ENCODE measurements at regions of chr7 and their contacts with region 1.

Region 1: GRCh38 chr7:111735661-111736551 is 173.6 kb upstream of the IMMP2L start:
- DNase-seq: peak; percentile 87 to 92 (median 88)
- ATAC-seq: peak; percentile 81
- H3K4me3 ChIP-seq: no peak overlapping the region
- H3K27ac ChIP-seq: no peak overlapping the region
- H3K4me1 ChIP-seq: no peaks in the 10 kb centered on the region
- H3K27me3 ChIP-seq: peaks cover 5 to 9% of the 10 kb centered on the region in 2 experiments; a peak in 3 of 5 replicates
- CTCF ChIP-seq: peak; percentile 89 to 98 (median 94)
- EP300 ChIP-seq: no peak
- POLR2A ChIP-seq: no peak
- RAD21 ChIP-seq: peak; percentile 98 to 99

Region 2: DNA sequence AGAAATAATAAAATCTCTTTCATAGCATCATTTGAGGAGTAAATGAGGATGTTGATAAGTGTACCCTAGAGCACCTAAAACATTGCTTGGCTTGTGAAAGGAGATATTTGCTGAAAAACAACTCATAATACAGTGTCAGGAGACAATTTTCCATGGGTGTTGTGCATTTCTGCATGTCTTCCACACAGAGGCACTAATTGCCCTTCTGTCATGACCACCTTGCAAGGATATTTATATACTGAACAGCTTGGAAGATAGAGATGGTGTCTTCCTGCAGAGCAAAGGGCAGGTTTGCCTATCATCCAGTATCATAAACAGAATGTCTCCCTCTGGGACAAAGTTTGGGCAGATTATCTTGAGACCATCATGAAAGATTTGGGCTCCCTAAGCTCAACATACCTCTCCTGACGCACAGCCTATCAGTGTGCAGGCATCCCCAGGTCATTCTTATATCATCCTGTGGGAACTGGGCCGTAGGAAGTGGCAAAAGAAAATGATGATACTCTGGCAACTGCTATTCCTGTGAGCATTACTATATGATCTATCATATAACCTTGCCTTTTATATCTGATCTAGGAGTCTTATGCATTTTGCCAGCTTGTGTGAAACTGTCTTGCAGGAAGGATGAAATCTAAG is 1140.1 kb before region 1 on chr7:
- CTCF ChIA-PET with region 1: no interaction called
- POLR2A ChIA-PET with region 1: no interaction called
- in situ Hi-C with region 1: no loop called
- intact Hi-C with region 1: loop called (anchors 10 kb)
- DNase-seq: peak in 1 of 4 experiments; percentile 4
- ATAC-seq: peak; percentile 55; the same call in 2 of the 3 replicates
- H3K4me3 ChIP-seq: no peak overlapping the region
- H3K27ac ChIP-seq: no peak overlapping the region
- H3K4me1 ChIP-seq: no peaks in the 10 kb centered on the region
- H3K27me3 ChIP-seq: no peaks in the 10 kb centered on the region
- CTCF ChIP-seq: peak in 1 of 3 experiments; percentile 13; a peak in 2 of 6 replicates
- EP300 ChIP-seq: no peak
- POLR2A ChIP-seq: no peak
- RAD21 ChIP-seq: peak in 1 of 2 experiments; percentile 22; a peak in 1 of 4 replicates

Region 3: GRCh38 chr7:111098011-111098925 is 637.6 kb before region 1 on chr7:
- CTCF ChIA-PET with region 1: no interaction called
- POLR2A ChIA-PET with region 1: no interaction called
- in situ Hi-C with region 1: loop called (anchors 10 kb)
- intact Hi-C with region 1: no loop called
- DNase-seq: peak in 3 of 4 experiments; percentile 20 to 64 (median 21)
- ATAC-seq: peak; percentile 93
- H3K4me3 ChIP-seq: no peak overlapping the region
- H3K27ac ChIP-seq: no peak overlapping the region
- H3K4me1 ChIP-seq: no peaks in the 10 kb centered on the region
- H3K27me3 ChIP-seq: no peaks in the 10 kb centered on the region
- CTCF ChIP-seq: peak; percentile 62 to 86 (median 72)
- EP300 ChIP-seq: no peak
- POLR2A ChIP-seq: no peak
- RAD21 ChIP-seq: peak; percentile 63 to 87

Region 4: GRCh38 chr7:111329367-111330234 is 406.3 kb before region 1 on chr7:
- CTCF ChIA-PET with region 1: interaction called, 22 read pairs
- POLR2A ChIA-PET with region 1: no interaction called
- in situ Hi-C with region 1: loop called (anchors 10 kb)
- intact Hi-C with region 1: loop called (anchors 1 kb)
- DNase-seq: peak in 2 of 4 experiments; percentile 41 to 64
- ATAC-seq: peak; percentile 82
- H3K4me3 ChIP-seq: peak overlapping the region; percentile 24
- H3K27ac ChIP-seq: peak overlapping the region; percentile 78
- H3K4me1 ChIP-seq: peaks cover 0 to 4% of the 10 kb centered on the region in 2 experiments; a peak in 1 of 5 replicates
- H3K27me3 ChIP-seq: no peaks in the 10 kb centered on the region
- CTCF ChIP-seq: peak; percentile 31 to 74 (median 45); a peak in 5 of 6 replicates
- EP300 ChIP-seq: peak; percentile 33; the same call in 1 of the 2 replicates
- POLR2A ChIP-seq: no peak
- RAD21 ChIP-seq: peak; percentile 83 to 91

Region 5: DNA sequence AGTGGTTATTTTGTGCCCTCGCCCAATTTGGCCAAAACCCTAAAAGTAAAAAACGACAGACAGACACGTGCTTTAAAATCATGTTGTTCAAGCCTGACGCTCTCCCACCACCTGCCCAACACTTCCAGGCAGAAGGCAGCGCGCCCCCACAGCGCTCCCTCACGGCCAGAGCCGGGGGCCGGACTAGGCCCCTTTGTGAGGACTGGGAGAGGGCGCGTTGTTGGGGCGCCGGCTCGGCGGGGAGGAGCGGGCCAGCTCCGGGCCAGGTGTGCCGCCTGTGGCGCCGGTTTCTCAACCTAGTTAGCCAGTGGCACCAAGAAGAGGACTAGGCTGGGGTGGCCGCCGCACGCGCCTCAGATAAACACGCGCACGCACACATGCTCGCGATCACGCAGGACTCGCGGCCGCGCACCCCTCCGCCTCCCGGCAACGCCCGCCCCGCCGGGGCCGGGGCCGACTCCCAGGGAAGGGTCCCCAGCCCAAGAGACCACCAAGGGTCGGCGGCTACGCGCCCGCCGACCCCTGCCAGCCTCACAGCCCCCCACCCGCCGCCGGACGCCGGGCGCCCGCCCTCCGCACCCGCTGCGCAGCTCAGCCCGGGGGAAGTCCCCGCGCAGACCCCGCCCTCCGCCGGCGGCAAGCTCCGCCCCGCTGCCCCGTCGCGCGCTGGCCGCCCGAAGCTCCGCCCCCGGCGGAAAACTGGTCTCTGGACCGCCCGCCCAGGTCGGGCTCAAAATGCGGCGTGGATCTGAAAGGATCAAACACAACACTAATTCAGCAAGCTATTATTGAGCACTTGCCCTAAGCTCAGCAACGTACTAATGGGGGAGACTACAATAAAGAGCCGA is 173.8 kb before region 1 on chr7 and contains the start of gene IMMP2L:
- CTCF ChIA-PET with region 1: no interaction called
- POLR2A ChIA-PET with region 1: interaction called, 3 read pairs
- in situ Hi-C with region 1: no loop called
- intact Hi-C with region 1: loop called (anchors 2 kb)
- DNase-seq: peak; percentile 98 to 100 (median 100)
- ATAC-seq: peak; percentile 96
- H3K4me3 ChIP-seq: peak within 1 kb of the TSS; percentile 67
- H3K27ac ChIP-seq: peak within 1 kb of the TSS; percentile 85
- H3K4me1 ChIP-seq: peaks cover 6 to 19% of the 10 kb centered on the region in 2 experiments; a peak in 4 of 5 replicates
- H3K27me3 ChIP-seq: no peaks in the 10 kb centered on the region; a peak in 1 of 5 replicates
- CTCF ChIP-seq: peak; percentile 81 to 87 (median 84)
- EP300 ChIP-seq: peak; percentile 62
- POLR2A ChIP-seq: peak; percentile 84
- RAD21 ChIP-seq: peak; percentile 79 to 80
- polyA plus RNA-seq, gene IMMP2L: 112 to 116 TPM

Region 6: GRCh38 chr7:111752022-111752582 is 16.2 kb after region 1 on chr7:
- CTCF ChIA-PET with region 1: interaction called, 7 read pairs
- POLR2A ChIA-PET with region 1: interaction called, 3 read pairs
- in situ Hi-C with region 1: no loop called
- intact Hi-C with region 1: loop called (anchors 2 kb)
- DNase-seq: peak; percentile 85 to 93 (median 89)
- ATAC-seq: peak; percentile 99
- H3K4me3 ChIP-seq: no peak overlapping the region
- H3K27ac ChIP-seq: no peak overlapping the region
- H3K4me1 ChIP-seq: no peaks in the 10 kb centered on the region
- H3K27me3 ChIP-seq: peaks cover 3 to 9% of the 10 kb centered on the region in 2 experiments; a peak in 1 of 5 replicates
- CTCF ChIP-seq: peak; percentile 95 to 98 (median 96)
- EP300 ChIP-seq: no peak
- POLR2A ChIP-seq: no peak
- RAD21 ChIP-seq: peak; percentile 73 to 88

Measured in K562 (cell line).